GM12878 (cell line): ENCODE measurements at regions of chr18 and their contacts with region 1.

Region 1: DNA sequence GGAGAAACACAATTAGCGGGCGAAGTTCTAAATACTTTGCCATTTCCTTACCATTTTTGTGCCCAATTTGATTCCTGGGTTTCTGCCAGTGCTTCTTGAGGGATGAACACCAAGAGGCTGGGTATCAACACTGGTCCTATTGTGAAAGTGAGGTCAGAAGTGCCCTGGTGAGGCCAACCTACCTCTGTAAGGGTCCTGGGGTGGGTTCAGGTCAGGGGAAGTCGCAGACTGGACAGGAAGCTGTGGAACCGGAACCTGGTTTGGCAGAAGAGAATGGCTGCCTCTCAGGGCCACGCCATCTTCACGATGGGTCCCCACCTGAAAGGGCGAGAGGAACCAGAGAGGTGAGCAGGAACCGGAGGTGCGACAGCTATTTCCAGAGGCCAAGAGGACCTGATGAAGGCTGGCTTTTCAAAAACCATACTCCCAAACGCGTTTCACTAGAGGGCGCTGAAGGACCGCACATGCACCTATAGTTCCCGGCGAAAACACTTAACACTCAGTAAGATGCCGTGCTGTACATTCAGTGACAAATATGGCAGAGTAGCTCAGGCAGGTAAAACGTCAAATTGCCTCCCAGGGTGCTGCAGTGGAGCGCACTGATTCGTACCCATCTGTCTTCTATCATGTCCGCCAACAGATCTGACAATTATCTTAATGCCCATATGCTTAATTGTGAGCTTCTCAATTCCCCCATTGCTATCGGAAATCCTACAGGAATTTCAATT is 275.3 kb upstream of the CCDC68 start:
- DNase-seq: peak; percentile 53
- ATAC-seq: peak; percentile 87
- H3K4me3 ChIP-seq: no peak overlapping the region
- H3K27ac ChIP-seq: no peak overlapping the region
- H3K4me1 ChIP-seq: peaks cover 19% of the 10 kb centered on the region
- H3K27me3 ChIP-seq: no peaks in the 10 kb centered on the region
- CTCF ChIP-seq: peak; percentile 81 to 95 (median 86)
- EP300 ChIP-seq: no peak
- POLR2A ChIP-seq: no peak
- RAD21 ChIP-seq: peak; percentile 99

Region 2: GRCh38 chr18:55048892-55049291 is 185.6 kb before region 1 on chr18:
- CTCF ChIA-PET with region 1: no interaction called
- POLR2A ChIA-PET with region 1: no interaction called
- RAD21 ChIA-PET with region 1: no interaction called
- SMC1A ChIA-PET with region 1: no interaction called
- in situ Hi-C with region 1: no loop called
- intact Hi-C with region 1: no loop called
- DNase-seq: no peak
- ATAC-seq: no peak
- H3K4me3 ChIP-seq: no peak overlapping the region
- H3K27ac ChIP-seq: no peak overlapping the region
- H3K4me1 ChIP-seq: no peaks in the 10 kb centered on the region
- H3K27me3 ChIP-seq: no peaks in the 10 kb centered on the region
- CTCF ChIP-seq: no peak
- EP300 ChIP-seq: no peak
- POLR2A ChIP-seq: no peak
- RAD21 ChIP-seq: no peak

Region 3: DNA sequence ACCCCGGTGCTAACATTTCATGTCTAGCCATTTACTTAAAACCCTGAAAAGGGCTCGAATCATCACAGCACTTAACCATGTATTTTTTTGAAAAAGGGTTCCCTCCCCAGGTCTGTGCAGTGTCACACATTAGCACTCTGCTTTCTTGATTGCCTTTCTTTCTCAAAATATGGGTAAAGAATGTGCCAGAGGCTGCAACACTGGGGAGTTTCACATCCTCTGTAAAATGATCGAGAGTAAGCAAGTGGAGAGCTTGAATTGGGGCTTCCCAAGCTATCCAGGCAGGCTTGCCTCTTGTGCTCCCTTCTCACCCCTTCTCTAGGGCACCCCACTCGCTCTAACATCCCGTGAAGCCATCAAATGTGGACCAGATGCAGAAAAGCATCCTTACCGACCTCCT is 98.3 kb before region 1 on chr18:
- CTCF ChIA-PET with region 1: no interaction called
- POLR2A ChIA-PET with region 1: no interaction called
- RAD21 ChIA-PET with region 1: no interaction called
- SMC1A ChIA-PET with region 1: no interaction called
- in situ Hi-C with region 1: no loop called
- intact Hi-C with region 1: no loop called
- DNase-seq: no peak
- ATAC-seq: peak; percentile 64
- H3K4me3 ChIP-seq: no peak overlapping the region
- H3K27ac ChIP-seq: no peak overlapping the region
- H3K4me1 ChIP-seq: no peaks in the 10 kb centered on the region
- H3K27me3 ChIP-seq: 0 out of 4 replicates have a peak, but pooled peaks cover 0 to 3% of the 10 kb centered on the region in 2 experiments
- CTCF ChIP-seq: no peak
- EP300 ChIP-seq: no peak
- POLR2A ChIP-seq: no peak
- RAD21 ChIP-seq: no peak

Region 4: DNA sequence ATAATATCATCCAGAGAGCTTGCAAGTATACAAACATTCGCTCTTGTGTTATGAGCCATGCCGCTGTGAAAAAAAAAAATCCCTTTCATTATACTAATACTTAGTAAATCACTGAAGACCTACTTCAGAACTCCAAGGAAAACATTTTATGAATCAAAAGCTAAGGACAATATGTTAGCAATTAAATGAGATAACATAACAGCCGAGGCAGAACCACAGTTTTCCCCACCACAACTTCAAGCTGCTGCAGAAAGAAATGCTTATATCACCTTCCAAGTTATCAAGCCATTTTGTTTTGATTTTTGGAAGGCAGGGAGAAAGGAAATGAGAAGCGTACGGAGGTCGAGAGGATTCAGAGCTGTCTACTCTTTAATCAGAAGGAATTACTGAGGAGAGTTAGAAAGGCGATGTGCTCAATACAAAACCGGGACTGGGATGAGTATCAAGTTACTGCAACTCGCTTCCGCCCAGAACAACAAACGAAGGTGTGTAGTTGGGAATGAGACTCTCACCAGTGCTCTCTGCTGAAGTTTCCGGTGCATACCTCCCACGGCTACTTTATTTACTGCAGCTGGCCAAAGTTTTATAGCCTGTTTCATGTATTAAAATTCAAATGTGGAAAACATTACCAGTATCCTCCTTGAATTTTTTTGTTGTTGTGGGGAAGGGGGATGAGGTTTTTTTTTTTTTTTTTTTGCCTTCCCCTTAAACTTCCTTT is 16.9 kb after region 1 on chr18:
- CTCF ChIA-PET with region 1: interaction called, 39 read pairs
- POLR2A ChIA-PET with region 1: interaction called, 10 read pairs
- RAD21 ChIA-PET with region 1: interaction called, 32 read pairs
- SMC1A ChIA-PET with region 1: interaction called, 98 read pairs
- in situ Hi-C with region 1: no loop called
- intact Hi-C with region 1: no loop called
- DNase-seq: no peak
- ATAC-seq: peak; percentile 23; the same call in 2 of the 3 replicates
- H3K4me3 ChIP-seq: peak overlapping the region; percentile 37; the same call in 1 of the 2 replicates
- H3K27ac ChIP-seq: peak overlapping the region; percentile 71
- H3K4me1 ChIP-seq: peaks cover 57% of the 10 kb centered on the region
- H3K27me3 ChIP-seq: no peaks in the 10 kb centered on the region
- CTCF ChIP-seq: no peak
- EP300 ChIP-seq: no peak
- POLR2A ChIP-seq: no peak
- RAD21 ChIP-seq: no peak

Region 5: GRCh38 chr18:55307505-55307904 is 73.0 kb after region 1 on chr18:
- CTCF ChIA-PET with region 1: interaction called, 9 read pairs
- POLR2A ChIA-PET with region 1: interaction called, 5 read pairs
- RAD21 ChIA-PET with region 1: interaction called, 10 read pairs
- SMC1A ChIA-PET with region 1: interaction called, 8 read pairs
- in situ Hi-C with region 1: no loop called
- intact Hi-C with region 1: no loop called
- DNase-seq: no peak
- ATAC-seq: peak; percentile 45
- H3K4me3 ChIP-seq: peak overlapping the region; percentile 29; the same call in 1 of the 2 replicates
- H3K27ac ChIP-seq: peak overlapping the region; percentile 43
- H3K4me1 ChIP-seq: peaks cover 13% of the 10 kb centered on the region; the same call in 1 of the 2 replicates
- H3K27me3 ChIP-seq: no peaks in the 10 kb centered on the region
- CTCF ChIP-seq: no peak
- EP300 ChIP-seq: no peak
- POLR2A ChIP-seq: no peak
- RAD21 ChIP-seq: no peak

Region 6: GRCh38 chr18:55337908-55338521 is 103.5 kb after region 1 on chr18:
- CTCF ChIA-PET with region 1: interaction called, 54 read pairs
- POLR2A ChIA-PET with region 1: interaction called, 6 read pairs
- RAD21 ChIA-PET with region 1: interaction called, 25 read pairs
- SMC1A ChIA-PET with region 1: interaction called, 36 read pairs
- in situ Hi-C with region 1: no loop called
- intact Hi-C with region 1: no loop called
- DNase-seq: no peak
- ATAC-seq: peak; percentile 42
- H3K4me3 ChIP-seq: no peak overlapping the region
- H3K27ac ChIP-seq: no peak overlapping the region
- H3K4me1 ChIP-seq: no peaks in the 10 kb centered on the region
- H3K27me3 ChIP-seq: peaks cover 1 to 3% of the 10 kb centered on the region in 2 experiments; a peak in 2 of 4 replicates
- CTCF ChIP-seq: no peak
- EP300 ChIP-seq: no peak
- POLR2A ChIP-seq: no peak
- RAD21 ChIP-seq: no peak

Region 7: DNA sequence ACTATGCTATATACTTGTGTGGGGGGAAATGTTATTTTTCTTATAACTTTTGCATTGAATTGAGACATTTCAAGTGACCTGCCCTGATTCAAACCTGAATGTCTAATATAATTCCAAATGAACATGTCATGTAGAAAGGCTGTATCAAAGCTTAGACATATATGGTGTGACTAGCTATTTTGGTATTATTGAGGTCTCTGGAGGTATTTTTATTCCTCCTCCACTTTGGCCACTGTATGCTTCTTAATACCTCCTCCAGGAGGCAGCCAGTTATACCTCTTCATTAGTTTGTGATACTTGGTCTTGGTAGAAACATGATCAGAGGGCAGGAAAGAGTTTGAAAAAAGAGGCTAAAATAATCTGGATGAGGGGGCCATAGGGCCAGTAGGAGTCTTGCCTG is 136.4 kb after region 1 on chr18:
- CTCF ChIA-PET with region 1: no interaction called
- POLR2A ChIA-PET with region 1: no interaction called
- RAD21 ChIA-PET with region 1: no interaction called
- SMC1A ChIA-PET with region 1: no interaction called
- in situ Hi-C with region 1: no loop called
- intact Hi-C with region 1: no loop called
- DNase-seq: no peak
- ATAC-seq: no peak
- H3K4me3 ChIP-seq: no peak overlapping the region
- H3K27ac ChIP-seq: no peak overlapping the region
- H3K4me1 ChIP-seq: peaks cover under 1% of the 10 kb centered on the region
- H3K27me3 ChIP-seq: no peaks in the 10 kb centered on the region
- CTCF ChIP-seq: no peak
- EP300 ChIP-seq: no peak
- POLR2A ChIP-seq: no peak
- RAD21 ChIP-seq: no peak

Region 8: GRCh38 chr18:55384551-55385275 is 150.2 kb after region 1 on chr18:
- CTCF ChIA-PET with region 1: interaction called, 9 read pairs
- POLR2A ChIA-PET with region 1: no interaction called
- RAD21 ChIA-PET with region 1: interaction called, 7 read pairs
- SMC1A ChIA-PET with region 1: interaction called, 11 read pairs
- in situ Hi-C with region 1: no loop called
- intact Hi-C with region 1: no loop called
- DNase-seq: no peak
- ATAC-seq: peak; percentile 59
- H3K4me3 ChIP-seq: no peak overlapping the region
- H3K27ac ChIP-seq: no peak overlapping the region
- H3K4me1 ChIP-seq: no peaks in the 10 kb centered on the region
- H3K27me3 ChIP-seq: no peaks in the 10 kb centered on the region
- CTCF ChIP-seq: peak; percentile 42 to 62 (median 47)
- EP300 ChIP-seq: no peak
- POLR2A ChIP-seq: no peak
- RAD21 ChIP-seq: peak; percentile 57

Region 9: GRCh38 chr18:55509631-55510324 is 275.2 kb after region 1 on chr18:
- CTCF ChIA-PET with region 1: no interaction called
- POLR2A ChIA-PET with region 1: no interaction called
- RAD21 ChIA-PET with region 1: no interaction called
- SMC1A ChIA-PET with region 1: interaction called, 3 read pairs
- in situ Hi-C with region 1: loop called (anchors 10 kb)
- intact Hi-C with region 1: loop called (anchors 10 kb)
- DNase-seq: peak; percentile 17
- ATAC-seq: peak; percentile 53
- H3K4me3 ChIP-seq: peak overlapping the region; percentile 37; the same call in 1 of the 2 replicates
- H3K27ac ChIP-seq: peak overlapping the region; percentile 52
- H3K4me1 ChIP-seq: no peaks in the 10 kb centered on the region
- H3K27me3 ChIP-seq: no peaks in the 10 kb centered on the region
- CTCF ChIP-seq: no peak
- EP300 ChIP-seq: no peak
- POLR2A ChIP-seq: no peak
- RAD21 ChIP-seq: no peak